H1 (cell line): ENCODE measurements at regions of chr15 and their contacts with region 1.

Region 1: DNA sequence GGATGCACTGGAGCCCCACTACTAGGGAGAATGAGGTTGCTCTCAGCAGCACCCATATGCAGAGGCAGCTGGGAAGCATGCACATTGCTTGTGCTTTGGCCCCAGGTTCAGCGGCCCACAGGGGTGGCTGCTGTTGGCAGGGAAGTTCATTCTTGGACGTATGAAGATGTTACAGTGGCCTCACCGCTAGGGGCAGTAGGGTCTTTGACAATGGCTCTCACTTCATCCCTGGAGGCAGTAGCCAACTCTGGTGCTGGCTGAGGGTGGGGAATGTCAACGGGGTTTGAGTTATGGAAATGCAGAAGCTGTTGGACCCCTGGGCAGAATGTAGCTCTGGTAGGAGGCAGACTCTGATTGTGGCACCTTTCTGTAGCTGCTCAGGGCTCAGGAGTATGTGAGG is 279.9 kb downstream of the SCAPER start:
- DNase-seq: no peak
- H3K4me3 ChIP-seq: no peak overlapping the region
- H3K27ac ChIP-seq: no peak overlapping the region
- H3K4me1 ChIP-seq: no peaks in the 10 kb centered on the region
- H3K27me3 ChIP-seq: no peaks in the 10 kb centered on the region
- CTCF ChIP-seq: peak; percentile 24 to 50 (median 43); a peak in 3 of 4 replicates
- EP300 ChIP-seq: no peak
- POLR2A ChIP-seq: no peak
- RAD21 ChIP-seq: peak; percentile 36 to 51

Region 2: DNA sequence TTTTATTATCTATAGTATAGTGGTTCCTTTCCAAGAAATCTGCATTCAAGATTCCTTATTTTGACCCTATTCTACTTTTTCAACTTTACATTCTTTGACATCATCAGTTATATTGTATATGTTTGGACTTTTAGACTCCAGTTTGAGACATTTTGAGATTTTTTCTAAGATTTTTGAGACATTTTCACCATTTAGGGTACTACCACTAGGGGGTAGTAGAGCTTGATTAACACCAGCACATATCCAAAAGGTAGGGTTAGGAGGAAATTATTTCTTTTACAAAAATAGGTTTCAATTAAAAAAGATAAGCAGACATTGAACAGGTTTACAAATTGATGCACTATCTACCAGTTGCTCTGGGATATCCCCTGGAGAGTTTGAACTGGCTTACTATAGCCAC is 17.4 kb after region 1 on chr15:
- CTCF ChIA-PET with region 1: interaction called, 10 read pairs
- POLR2A ChIA-PET with region 1: no interaction called
- DNase-seq: no peak
- H3K4me3 ChIP-seq: no peak overlapping the region
- H3K27ac ChIP-seq: no peak overlapping the region
- H3K4me1 ChIP-seq: peaks cover 0 to 3% (median 0%) of the 10 kb centered on the region in 4 experiments; a peak in 1 of 7 replicates
- H3K27me3 ChIP-seq: no peaks in the 10 kb centered on the region
- CTCF ChIP-seq: no peak; a peak in 1 of 4 replicates
- EP300 ChIP-seq: no peak
- POLR2A ChIP-seq: no peak
- RAD21 ChIP-seq: peak in 1 of 2 experiments; percentile 21; a peak in 2 of 4 replicates